ENCODE measurements at regions of chr4 and their contacts with region 1.

Region 1: DNA sequence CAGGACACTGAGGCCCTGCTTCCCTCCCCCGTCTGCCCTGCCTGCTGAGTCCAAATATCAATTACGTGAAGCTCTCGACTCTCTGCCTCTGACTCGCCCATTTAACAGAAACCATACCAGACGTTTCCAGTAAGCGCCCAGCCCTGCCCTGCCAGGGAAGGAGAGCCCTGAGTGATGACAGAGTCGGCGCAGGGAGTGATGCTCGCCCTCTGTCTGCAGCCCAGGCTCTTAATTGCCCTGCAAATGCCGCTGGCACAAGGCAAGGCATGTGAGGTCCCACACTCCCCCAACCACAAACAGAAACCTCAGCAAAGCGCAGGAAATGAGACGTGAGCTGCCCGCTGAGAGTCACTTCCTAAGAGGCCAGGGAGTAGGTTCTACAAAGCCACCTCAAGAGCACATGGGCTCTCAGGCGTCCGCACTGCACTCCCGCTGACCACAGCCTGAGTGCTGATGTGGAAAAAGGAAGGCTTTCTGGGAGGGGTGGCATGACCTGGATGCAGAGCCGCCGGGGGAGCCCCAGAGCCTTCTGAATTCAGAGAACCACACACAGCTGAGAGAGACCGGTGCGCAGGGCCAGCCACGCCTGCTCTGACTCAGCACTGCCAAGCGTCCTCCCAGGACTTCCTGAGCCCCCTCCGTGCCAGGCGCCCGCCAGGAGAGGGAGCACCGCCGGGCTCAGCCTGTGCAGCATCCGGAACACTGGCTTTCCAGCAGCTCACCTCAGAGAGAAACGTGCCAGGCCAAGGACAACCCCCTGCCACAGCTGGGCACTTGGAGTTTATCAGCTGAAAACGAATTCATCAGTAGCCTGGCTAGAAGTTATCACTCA is 5.3 kb downstream of the ZFYVE28 start:
- DNase-seq: peak; percentile 96
- H3K4me3 Mint-ChIP-seq: peak overlapping the region; percentile 66
- H3K27ac Mint-ChIP-seq: peak overlapping the region; percentile 97
- H3K4me1 Mint-ChIP-seq: peaks cover 63% of the 10 kb centered on the region
- H3K27me3 Mint-ChIP-seq: no peaks in the 10 kb centered on the region

Region 2: DNA sequence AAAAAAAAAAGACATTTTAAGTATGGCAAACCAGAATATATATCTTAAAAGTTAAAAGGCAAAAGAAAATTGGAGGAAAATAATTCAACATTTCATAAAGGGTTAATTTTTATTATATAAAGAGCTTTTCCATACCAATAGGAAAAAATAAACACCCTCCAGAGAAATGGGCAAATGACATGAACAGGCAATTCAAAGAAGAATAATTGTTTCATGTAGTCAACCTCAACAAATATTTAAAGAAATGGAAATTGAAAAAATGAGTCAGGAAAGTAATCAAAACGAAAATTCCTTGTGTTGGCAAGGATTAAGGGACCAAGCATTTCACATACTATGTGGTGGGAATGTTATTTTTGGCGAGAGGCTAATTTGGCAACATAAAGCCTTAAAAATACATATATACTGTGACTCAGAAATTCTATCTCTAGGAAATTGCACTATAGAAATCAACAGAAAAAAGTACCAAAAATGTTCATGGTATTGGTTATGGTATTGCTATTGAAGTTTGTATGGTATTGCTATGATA is 258.8 kb before region 1 on chr4:
- CTCF ChIA-PET with region 1: no interaction called
- POLR2A ChIA-PET with region 1: no interaction called
- intact Hi-C with region 1: no loop called
- DNase-seq: no peak
- H3K4me3 Mint-ChIP-seq: no peak overlapping the region
- H3K27ac Mint-ChIP-seq: no peak overlapping the region
- H3K4me1 Mint-ChIP-seq: no peaks in the 10 kb centered on the region
- H3K27me3 Mint-ChIP-seq: no peaks in the 10 kb centered on the region

Region 3: GRCh38 chr4:2212831-2213230 is 200.3 kb before region 1 on chr4:
- CTCF ChIA-PET with region 1: no interaction called
- POLR2A ChIA-PET with region 1: no interaction called
- intact Hi-C with region 1: no loop called
- DNase-seq: no peak
- H3K4me3 Mint-ChIP-seq: no peak overlapping the region
- H3K27ac Mint-ChIP-seq: no peak overlapping the region
- H3K4me1 Mint-ChIP-seq: no peaks in the 10 kb centered on the region
- H3K27me3 Mint-ChIP-seq: no peaks in the 10 kb centered on the region

Region 4: DNA sequence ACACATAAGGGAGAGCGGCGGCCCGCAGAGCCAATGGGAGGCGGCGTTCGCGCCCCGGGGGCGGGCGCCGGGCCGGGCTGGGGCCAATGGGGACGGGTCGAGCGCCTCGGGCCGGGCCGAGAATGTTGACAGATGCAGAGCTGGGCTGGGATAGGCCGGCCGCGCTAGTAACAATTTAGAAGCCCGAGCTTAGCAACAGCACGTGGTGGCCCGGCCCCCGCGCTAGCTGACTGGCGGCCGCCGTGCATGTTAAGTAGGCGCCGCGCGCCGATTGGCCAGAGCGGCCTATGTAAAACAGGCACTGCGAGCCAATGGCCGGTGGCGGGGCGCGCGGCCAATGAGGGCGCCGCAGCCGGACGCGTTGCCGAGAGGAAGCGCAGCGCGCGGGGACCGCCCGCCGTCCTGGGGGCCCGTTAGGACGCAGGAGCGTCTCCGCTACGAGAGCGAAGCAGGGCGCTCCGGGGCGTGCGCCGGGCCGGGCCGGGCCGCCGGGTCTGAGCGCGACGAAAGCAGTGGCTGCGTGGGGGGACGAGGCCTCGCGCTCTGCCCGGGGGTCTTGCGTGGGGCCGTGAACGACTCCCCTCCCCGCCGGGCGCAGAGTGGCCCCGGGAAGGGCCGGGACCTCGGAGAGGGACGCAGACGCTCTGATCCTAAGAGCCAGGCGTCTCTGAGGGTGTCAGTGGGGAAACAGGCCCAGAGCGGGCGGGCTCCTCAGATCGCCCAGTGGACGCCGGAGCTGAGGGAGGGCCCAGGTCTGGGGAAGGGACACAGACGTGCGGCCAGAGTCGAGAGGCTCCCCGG is 150.8 kb before region 1 on chr4:
- CTCF ChIA-PET with region 1: interaction called, 3 read pairs
- POLR2A ChIA-PET with region 1: interaction called, 12 read pairs
- intact Hi-C with region 1: loop called (anchors 1 kb)
- DNase-seq: peak; percentile 99
- H3K4me3 Mint-ChIP-seq: peak overlapping the region; percentile 62
- H3K27ac Mint-ChIP-seq: peak overlapping the region; percentile 54
- H3K4me1 Mint-ChIP-seq: peaks cover 3% of the 10 kb centered on the region
- H3K27me3 Mint-ChIP-seq: no peaks in the 10 kb centered on the region

Region 5: GRCh38 chr4:2281575-2282343 is 131.3 kb before region 1 on chr4:
- CTCF ChIA-PET with region 1: interaction called, 3 read pairs
- POLR2A ChIA-PET with region 1: no interaction called
- intact Hi-C with region 1: loop called (anchors 1 kb)
- DNase-seq: peak; percentile 88
- H3K4me3 Mint-ChIP-seq: peak overlapping the region; percentile 20
- H3K27ac Mint-ChIP-seq: peak overlapping the region; percentile 88
- H3K4me1 Mint-ChIP-seq: peaks cover 31% of the 10 kb centered on the region
- H3K27me3 Mint-ChIP-seq: no peaks in the 10 kb centered on the region

Region 6: DNA sequence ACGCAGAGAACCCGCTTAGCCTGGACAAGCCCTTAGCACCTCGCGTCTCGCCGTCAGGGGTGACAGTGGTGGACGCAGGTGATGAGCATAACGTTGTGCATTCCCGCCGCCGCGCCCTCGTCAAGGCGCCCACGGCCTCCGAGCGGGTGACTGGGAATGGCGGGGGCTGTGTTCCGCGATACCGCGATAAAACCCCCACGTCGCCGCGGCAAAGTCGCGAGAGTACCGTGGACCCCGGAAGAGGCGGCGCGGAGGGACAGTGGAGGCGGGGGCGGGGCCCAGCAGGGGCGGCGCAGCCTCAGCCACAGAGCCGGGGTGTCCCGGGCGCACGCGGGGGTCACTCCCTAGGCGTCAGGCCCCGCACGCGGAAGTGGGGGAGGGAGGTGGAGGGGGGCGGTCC is 48.4 kb before region 1 on chr4:
- CTCF ChIA-PET with region 1: interaction called, 3 read pairs
- POLR2A ChIA-PET with region 1: no interaction called
- intact Hi-C with region 1: loop called (anchors 2 kb)
- DNase-seq: peak; percentile 79
- H3K4me3 Mint-ChIP-seq: peak overlapping the region; percentile 64
- H3K27ac Mint-ChIP-seq: no peak overlapping the region
- H3K4me1 Mint-ChIP-seq: peaks cover 9% of the 10 kb centered on the region
- H3K27me3 Mint-ChIP-seq: no peaks in the 10 kb centered on the region

Region 7: DNA sequence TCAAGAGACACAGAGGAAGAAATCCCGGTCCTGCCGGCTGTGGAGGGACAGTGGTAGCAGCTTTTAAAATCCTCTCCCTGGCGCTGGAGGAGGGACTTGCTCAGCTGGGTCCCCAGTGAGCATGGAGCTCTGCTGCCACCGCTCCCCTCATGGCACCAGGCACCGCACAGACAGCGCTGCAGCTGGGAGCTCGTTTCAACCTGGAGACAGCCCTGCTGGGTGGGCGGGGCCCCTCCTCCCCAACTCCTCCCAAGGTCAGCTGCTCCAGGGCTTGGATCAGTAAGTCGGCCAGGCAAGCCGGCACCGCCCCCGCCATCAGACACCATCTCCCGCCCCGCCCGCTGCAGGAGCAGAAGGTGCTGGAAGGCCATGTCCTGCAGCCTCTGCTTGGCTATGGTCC is 11.1 kb before region 1 on chr4:
- CTCF ChIA-PET with region 1: interaction called, 21 read pairs
- POLR2A ChIA-PET with region 1: interaction called, 24 read pairs
- intact Hi-C with region 1: no loop called
- DNase-seq: peak; percentile 51
- H3K4me3 Mint-ChIP-seq: peak overlapping the region; percentile 60
- H3K27ac Mint-ChIP-seq: no peak overlapping the region
- H3K4me1 Mint-ChIP-seq: peaks cover 28% of the 10 kb centered on the region
- H3K27me3 Mint-ChIP-seq: no peaks in the 10 kb centered on the region

Region 8: DNA sequence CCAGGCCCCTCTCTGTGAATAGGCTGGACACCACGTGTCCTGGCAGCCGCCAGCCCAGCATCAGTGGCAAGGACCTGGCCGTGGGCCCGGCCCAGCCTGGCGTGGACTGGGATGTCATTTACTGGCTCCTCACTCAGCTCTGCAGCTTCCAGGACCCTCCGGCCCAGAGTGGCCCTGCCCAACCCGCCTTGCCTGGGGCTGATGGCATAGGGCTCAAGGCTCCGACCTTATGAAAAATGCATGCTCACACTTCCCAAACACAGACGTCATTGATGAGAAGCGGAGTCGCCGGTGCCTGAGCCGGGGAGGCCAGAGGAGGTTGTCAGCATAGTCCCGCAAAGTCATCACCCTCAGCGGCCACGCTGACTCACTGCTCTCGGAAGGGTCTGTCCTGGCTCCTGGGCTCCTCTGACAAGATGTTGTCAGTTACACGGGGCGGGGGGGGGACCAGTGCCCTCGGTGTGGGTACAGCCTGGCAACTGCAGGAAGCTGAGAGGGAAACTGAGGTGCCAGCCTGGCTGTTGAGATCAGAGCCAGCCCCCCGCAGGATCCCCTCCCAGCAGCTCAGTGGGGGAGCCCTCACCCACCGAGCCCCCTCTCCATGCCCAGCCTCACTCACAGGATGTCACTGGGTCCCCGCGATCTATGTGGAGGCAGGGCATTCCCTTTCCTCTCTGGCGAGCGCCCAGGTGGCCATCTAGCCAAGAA is 20.0 kb after region 1 on chr4:
- CTCF ChIA-PET with region 1: no interaction called
- POLR2A ChIA-PET with region 1: no interaction called
- intact Hi-C with region 1: no loop called
- DNase-seq: no peak
- H3K4me3 Mint-ChIP-seq: no peak overlapping the region
- H3K27ac Mint-ChIP-seq: no peak overlapping the region
- H3K4me1 Mint-ChIP-seq: no peaks in the 10 kb centered on the region
- H3K27me3 Mint-ChIP-seq: no peaks in the 10 kb centered on the region

Region 9: GRCh38 chr4:2468445-2469192 is 55.5 kb after region 1 on chr4 and contains the start of gene RNF4:
- CTCF ChIA-PET with region 1: interaction called, 12 read pairs
- POLR2A ChIA-PET with region 1: interaction called, 28 read pairs
- intact Hi-C with region 1: loop called (anchors 1 kb)
- DNase-seq: peak; percentile 98
- H3K4me3 Mint-ChIP-seq: peak within 1 kb of the TSS; percentile 97
- H3K27ac Mint-ChIP-seq: peak within 1 kb of the TSS; percentile 98
- H3K4me1 Mint-ChIP-seq: peaks cover 42% of the 10 kb centered on the region
- H3K27me3 Mint-ChIP-seq: no peaks in the 10 kb centered on the region
- total RNA-seq, gene RNF4: 84.6 to 90.3 TPM

Region 10: DNA sequence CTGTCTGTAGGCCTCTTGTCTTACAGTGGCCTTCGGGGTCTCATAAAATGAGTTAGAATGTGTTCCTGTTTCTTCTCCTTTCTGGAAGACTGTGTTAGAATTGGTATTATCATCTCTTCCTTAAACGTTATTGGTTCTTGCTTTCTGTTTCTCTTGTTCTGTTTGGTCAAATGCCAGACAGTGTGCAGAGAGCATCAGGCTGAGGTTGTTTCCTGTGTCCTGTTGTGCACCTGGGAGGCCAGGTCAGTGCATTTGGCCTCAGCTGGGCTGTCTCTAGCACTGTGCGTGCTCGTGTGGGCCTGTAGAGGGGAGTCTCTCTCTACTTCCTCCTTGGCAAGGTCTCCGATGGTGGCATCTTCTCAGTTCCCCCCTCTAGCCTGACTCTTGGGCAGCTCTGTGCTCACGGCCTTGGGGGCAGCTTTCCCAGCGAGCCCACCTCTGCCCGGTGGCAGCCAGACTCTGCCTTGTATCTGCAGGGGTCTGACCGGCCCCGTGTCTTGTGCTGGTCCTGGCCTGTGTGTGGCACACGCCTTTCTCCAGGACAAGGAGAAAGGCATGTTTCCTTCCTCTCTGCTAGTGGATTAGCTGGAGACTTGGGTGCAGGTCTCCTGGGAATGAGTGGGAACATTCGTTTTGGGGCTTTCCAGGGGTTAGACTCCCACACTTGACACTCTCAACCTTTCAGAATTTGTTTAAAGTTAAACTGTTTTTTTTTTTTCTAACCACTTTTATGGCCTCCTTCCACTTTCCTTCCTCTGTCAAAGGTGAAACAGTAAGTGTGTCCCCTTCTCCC is 185.6 kb after region 1 on chr4:
- CTCF ChIA-PET with region 1: no interaction called
- POLR2A ChIA-PET with region 1: no interaction called
- intact Hi-C with region 1: no loop called
- DNase-seq: no peak
- H3K4me3 Mint-ChIP-seq: no peak overlapping the region
- H3K27ac Mint-ChIP-seq: peak overlapping the region; percentile 60
- H3K4me1 Mint-ChIP-seq: peaks cover 50% of the 10 kb centered on the region
- H3K27me3 Mint-ChIP-seq: no peaks in the 10 kb centered on the region

Region 11: GRCh38 chr4:2934813-2935761 is 522.0 kb after region 1 on chr4:
- CTCF ChIA-PET with region 1: no interaction called
- POLR2A ChIA-PET with region 1: no interaction called
- intact Hi-C with region 1: loop called (anchors 1 kb)
- DNase-seq: peak; percentile 97
- H3K4me3 Mint-ChIP-seq: peak overlapping the region; percentile 93
- H3K27ac Mint-ChIP-seq: peak overlapping the region; percentile 95
- H3K4me1 Mint-ChIP-seq: peaks cover 53% of the 10 kb centered on the region
- H3K27me3 Mint-ChIP-seq: no peaks in the 10 kb centered on the region

Measured in activated CD4-positive, alpha-beta memory T cell treated with anti-CD3 and anti-CD28 coated beads for 36 hours (primary cell).